ENCODE measurements at regions of chr21 and their contacts with region 1.

Region 1: GRCh38 chr21:42652527-42653230 is 742 bp upstream of the PDE9A start:
- DNase-seq: no peak
- ATAC-seq: no peak
- H3K4me3 Mint-ChIP-seq: peak overlapping the region; percentile 69
- H3K27ac Mint-ChIP-seq: no peak overlapping the region
- H3K4me1 Mint-ChIP-seq: peaks cover 17% of the 10 kb centered on the region
- H3K27me3 Mint-ChIP-seq: no peaks in the 10 kb centered on the region
- CTCF ChIP-seq: no peak

Region 2: DNA sequence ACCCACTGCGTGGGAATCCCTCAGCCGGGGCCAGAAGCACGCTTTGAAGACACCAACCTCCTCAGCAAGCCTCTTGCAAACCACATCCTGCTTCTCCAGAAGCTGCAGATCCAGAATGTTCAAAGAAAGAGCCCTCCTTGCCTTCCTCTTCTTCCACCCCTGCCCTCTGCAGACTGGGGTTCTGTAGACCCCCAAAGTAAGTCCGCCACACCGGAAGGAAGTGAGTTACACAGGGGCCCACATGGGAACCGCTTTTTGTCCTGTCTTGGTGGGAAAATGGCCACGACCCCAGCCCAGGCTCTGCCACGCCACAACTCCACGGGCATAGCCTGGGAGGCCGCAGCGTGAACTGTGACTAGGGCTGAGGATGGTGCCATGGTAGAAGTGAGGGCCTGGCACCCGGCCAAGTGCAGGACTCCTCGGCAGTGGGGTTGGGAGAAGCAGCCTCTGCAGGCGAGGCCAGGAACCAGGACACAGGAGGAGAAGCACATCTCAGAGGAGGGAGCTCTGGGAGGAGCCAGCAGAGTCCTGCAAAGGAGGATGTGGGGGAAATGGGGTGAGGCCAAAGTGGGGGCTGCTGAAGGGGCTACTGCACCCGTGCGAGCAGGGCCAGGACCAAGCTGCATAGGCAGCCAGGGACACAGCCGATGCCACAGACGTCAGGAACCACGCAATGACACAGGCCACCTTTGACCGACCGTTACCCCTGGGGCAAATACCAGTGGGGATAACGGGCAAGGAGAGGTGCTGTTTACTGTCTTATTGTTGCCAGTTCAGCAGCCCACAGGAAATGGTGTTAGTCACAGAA is 31.6 kb after region 1 on chr21:
- CTCF ChIA-PET with region 1: interaction called, 3 read pairs
- POLR2A ChIA-PET with region 1: interaction called, 3 read pairs
- intact Hi-C with region 1: loop called (anchors 2 kb)
- DNase-seq: peak; percentile 74
- ATAC-seq: peak; percentile 64
- H3K4me3 Mint-ChIP-seq: peak overlapping the region; percentile 71
- H3K27ac Mint-ChIP-seq: peak overlapping the region; percentile 96
- H3K4me1 Mint-ChIP-seq: peaks cover 50% of the 10 kb centered on the region
- H3K27me3 Mint-ChIP-seq: no peaks in the 10 kb centered on the region
- CTCF ChIP-seq: no peak